ENCODE measurements at regions of chr5 and their contacts with region 1.

Region 1: DNA sequence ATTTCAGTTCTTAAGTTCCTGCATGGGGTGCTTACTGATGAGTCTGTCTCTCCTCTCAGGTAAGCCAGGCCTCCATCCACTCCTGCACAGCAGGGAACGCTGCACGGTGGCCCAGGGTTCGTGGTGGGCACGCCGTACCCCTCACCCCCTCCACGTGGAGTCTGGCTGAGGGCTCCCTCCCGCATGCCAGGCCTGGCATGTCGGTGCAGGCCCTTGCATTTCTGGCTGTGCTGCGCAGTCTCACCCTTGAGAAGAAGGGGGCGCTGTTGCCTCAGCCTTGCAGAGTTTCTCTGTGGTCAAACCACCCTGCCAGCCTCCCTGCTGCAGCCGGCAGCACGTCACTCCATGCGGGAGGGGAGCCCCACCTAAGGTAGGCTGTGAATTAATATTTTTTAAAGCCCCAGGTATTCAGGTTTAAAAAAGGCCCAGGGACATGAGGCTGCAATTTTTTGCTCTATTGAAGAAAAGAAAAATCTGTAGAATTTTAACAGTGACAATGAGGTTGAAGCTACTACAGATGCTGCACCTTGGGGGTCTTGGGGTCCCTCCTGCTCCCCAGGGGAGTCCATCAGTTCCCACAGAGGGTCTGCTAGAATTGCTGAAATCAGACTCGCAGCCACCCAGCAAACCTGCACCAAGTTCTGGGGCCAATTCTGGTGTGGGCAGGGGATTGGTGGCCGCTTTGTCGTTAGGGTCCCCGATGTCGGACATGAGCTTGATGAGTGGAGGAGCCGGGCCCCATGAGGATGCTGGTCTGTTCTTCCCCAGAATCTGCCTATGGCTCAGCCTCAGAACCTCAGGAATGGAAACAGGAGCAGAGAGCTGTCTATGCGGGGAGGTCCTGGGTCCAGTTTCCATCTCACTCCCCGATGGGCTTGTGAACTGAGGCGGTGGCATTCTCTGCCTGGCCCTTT is 52.6 kb downstream of the TENT4A start:
- DNase-seq: peak; percentile 90 to 91
- ATAC-seq: peak; percentile 85 to 89
- H3K4me3 ChIP-seq: peak overlapping the region; percentile 37
- H3K27ac ChIP-seq: peak overlapping the region; percentile 78 to 86
- H3K4me1 ChIP-seq: peaks cover 19% of the 10 kb centered on the region
- CTCF ChIP-seq: peak; percentile 87
- EP300 ChIP-seq: no peak
- POLR2A ChIP-seq: 0 out of 2 replicates have a peak, but pooled peaks have one; percentile 11
- RAD21 ChIP-seq: peak; percentile 89 to 92

Region 2: GRCh38 chr5:6750951-6751685 is 14.8 kb before region 1 on chr5:
- CTCF ChIA-PET with region 1: interaction called, 14 read pairs
- POLR2A ChIA-PET with region 1: no interaction called
- DNase-seq: no peak
- ATAC-seq: no peak
- H3K4me3 ChIP-seq: no peak overlapping the region
- H3K27ac ChIP-seq: no peak overlapping the region
- H3K4me1 ChIP-seq: no peaks in the 10 kb centered on the region
- CTCF ChIP-seq: no peak
- EP300 ChIP-seq: no peak
- POLR2A ChIP-seq: no peak
- RAD21 ChIP-seq: no peak

Region 3: GRCh38 chr5:6780802-6781391 is 15.0 kb after region 1 on chr5:
- CTCF ChIA-PET with region 1: interaction called, 20 read pairs
- POLR2A ChIA-PET with region 1: no interaction called
- DNase-seq: peak; percentile 24 to 53
- ATAC-seq: peak in 1 of 2 experiments; percentile 82; a peak in 4 of 6 replicates
- H3K4me3 ChIP-seq: no peak overlapping the region
- H3K27ac ChIP-seq: no peak overlapping the region
- H3K4me1 ChIP-seq: no peaks in the 10 kb centered on the region
- CTCF ChIP-seq: no peak; the same call in 2 of the 3 replicates
- EP300 ChIP-seq: no peak
- POLR2A ChIP-seq: no peak
- RAD21 ChIP-seq: 0 out of 5 replicates have a peak, but pooled peaks of 1 of the 2 experiments have one; percentile 17

Region 4: GRCh38 chr5:7745882-7746610 is 980.2 kb after region 1 on chr5:
- CTCF ChIA-PET with region 1: interaction called, 20 read pairs
- POLR2A ChIA-PET with region 1: no interaction called
- DNase-seq: peak; percentile 48 to 72
- ATAC-seq: peak; percentile 63 to 87; a peak in 4 of 6 replicates
- H3K4me3 ChIP-seq: no peak overlapping the region
- H3K27ac ChIP-seq: no peak overlapping the region
- H3K4me1 ChIP-seq: no peaks in the 10 kb centered on the region
- CTCF ChIP-seq: peak; percentile 70
- EP300 ChIP-seq: no peak
- POLR2A ChIP-seq: no peak
- RAD21 ChIP-seq: peak; percentile 69 to 75